ENCODE measurements at regions of chr12 and their contacts with region 1.

Region 1: DNA sequence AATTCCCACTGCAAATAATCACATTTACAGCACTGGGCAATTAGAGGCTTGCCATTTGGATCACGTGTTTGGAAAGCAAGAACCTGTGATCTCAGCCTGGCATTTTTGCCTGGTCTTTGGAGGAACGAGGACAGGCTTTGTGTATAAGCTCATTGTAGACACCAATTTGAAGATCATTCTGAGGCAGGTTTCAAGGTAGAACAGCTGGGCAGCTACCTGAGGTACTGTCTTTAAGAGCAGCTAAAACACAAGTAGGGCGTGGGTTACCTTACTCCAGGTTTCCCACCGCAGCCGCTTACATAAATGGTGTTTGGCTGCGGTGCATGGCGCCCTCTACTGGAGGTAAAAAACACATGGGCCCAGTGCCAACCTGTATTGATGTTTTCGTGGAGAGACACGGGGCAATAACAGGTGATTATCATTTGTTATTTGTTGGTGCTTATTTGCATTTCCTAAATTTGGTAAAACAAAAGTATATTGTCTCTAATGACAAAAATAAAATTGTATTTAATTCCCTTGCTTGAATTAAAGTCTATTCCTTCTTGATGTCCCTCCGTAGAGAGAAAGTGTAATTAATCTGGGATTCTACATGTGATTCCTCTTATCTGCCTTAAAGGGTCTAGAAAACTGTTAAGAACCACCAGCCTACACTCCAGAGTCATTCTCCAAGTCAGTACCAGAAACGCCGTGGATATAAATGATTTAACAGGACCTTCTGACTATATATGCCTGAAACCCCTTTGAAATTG is 69.7 kb downstream of the SVOP start:
- DNase-seq: peak; percentile 52
- H3K4me3 Mint-ChIP-seq: no peak overlapping the region
- H3K27ac Mint-ChIP-seq: no peak overlapping the region
- H3K4me1 Mint-ChIP-seq: no peaks in the 10 kb centered on the region
- H3K27me3 Mint-ChIP-seq: peaks cover 14% of the 10 kb centered on the region

Region 2: GRCh38 chr12:108803428-108804105 is 147.6 kb before region 1 on chr12:
- intact Hi-C with region 1: loop called (anchors 1 kb)
- DNase-seq: peak; percentile 50
- H3K4me3 Mint-ChIP-seq: no peak overlapping the region
- H3K27ac Mint-ChIP-seq: peak overlapping the region; percentile 60
- H3K4me1 Mint-ChIP-seq: peaks cover 9% of the 10 kb centered on the region
- H3K27me3 Mint-ChIP-seq: no peaks in the 10 kb centered on the region

Region 3: DNA sequence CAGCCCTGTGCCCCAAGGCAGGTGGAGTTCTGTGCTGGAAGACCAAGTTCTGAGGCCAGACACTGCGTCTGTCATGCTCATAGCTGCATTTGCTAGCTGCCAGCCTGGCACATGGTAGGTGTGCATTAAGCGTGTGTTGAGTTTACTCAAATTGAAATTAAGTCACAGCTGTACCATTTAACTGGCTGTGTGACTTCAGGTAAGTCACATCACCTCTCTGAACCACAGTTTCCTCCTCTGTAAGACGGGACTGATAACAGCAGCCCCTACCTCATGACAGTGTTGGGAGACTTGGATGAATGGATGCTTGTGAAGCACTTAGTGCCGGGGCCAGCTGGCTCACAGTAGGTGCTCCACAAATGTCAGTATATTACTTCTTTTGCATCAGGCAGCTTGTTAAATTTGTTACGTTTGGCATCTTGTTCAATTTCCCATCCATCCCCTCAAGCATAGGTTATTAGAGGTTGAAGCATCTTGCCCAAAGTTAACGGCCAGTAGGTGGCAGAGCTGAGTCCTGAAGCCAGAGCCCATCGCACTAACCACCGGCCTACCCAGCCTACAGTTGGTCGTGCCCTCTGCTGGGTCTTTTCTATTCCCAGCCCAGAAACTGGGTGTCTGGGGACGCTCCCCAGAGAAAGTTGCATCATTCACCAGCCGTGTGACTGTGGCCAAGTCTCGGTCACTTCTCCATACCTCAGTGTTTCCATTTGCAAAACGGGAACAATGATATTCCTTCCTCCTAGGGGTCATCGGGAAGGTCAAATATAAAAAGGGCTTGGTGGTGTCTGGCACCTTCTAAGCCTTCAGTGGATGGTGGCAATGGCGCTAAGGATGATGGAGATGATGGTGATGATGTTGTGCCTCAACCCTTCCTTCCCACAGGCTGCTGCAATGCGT is 66.8 kb before region 1 on chr12:
- intact Hi-C with region 1: loop called (anchors 2 kb)
- DNase-seq: peak; percentile 43
- H3K4me3 Mint-ChIP-seq: no peak overlapping the region
- H3K27ac Mint-ChIP-seq: no peak overlapping the region
- H3K4me1 Mint-ChIP-seq: no peaks in the 10 kb centered on the region
- H3K27me3 Mint-ChIP-seq: no peaks in the 10 kb centered on the region

Region 4: DNA sequence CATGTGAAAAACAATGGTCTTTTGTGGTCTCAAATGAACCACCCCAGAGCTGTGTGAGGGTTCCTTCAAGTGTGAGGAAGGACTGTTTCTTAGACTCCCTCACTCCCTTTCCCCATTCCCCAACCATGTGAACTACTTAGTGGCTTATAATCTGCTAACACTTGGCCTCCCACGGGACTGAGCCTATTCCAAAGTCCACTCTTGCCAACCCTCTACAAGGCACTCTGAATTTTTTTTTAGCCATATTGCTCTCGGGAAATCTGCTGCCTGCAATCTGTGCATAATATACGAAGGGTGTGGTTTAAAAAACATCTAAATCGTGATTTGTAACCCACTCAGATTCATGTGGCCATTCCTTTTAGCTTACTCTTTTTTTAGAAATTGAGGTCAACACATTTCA is 67.1 kb after region 1 on chr12:
- intact Hi-C with region 1: no loop called
- DNase-seq: no peak
- H3K4me3 Mint-ChIP-seq: no peak overlapping the region
- H3K27ac Mint-ChIP-seq: no peak overlapping the region
- H3K4me1 Mint-ChIP-seq: no peaks in the 10 kb centered on the region
- H3K27me3 Mint-ChIP-seq: peaks cover 19% of the 10 kb centered on the region

Measured in activated T-helper 2 cell treated with anti-CD3 and anti-CD28 coated beads, Interferon-gamma antibody, Interleukin-2, Interleukin-4, amounts not matched to agents 10 μg/mL and 5 μg/mL and 100 μg/mL, durations not matched to agents 14 hours and 24 hours and 36 hours (primary cell).